Activated naive CD4-positive, alpha-beta T cell treated with anti-CD3 and anti-CD28 coated beads, Interleukin-2, amount 10 ng/mL, durations not matched to agents 7 days and 5 days (primary cell): ENCODE measurements at regions of chr1 and their contacts with region 1.

Region 1: DNA sequence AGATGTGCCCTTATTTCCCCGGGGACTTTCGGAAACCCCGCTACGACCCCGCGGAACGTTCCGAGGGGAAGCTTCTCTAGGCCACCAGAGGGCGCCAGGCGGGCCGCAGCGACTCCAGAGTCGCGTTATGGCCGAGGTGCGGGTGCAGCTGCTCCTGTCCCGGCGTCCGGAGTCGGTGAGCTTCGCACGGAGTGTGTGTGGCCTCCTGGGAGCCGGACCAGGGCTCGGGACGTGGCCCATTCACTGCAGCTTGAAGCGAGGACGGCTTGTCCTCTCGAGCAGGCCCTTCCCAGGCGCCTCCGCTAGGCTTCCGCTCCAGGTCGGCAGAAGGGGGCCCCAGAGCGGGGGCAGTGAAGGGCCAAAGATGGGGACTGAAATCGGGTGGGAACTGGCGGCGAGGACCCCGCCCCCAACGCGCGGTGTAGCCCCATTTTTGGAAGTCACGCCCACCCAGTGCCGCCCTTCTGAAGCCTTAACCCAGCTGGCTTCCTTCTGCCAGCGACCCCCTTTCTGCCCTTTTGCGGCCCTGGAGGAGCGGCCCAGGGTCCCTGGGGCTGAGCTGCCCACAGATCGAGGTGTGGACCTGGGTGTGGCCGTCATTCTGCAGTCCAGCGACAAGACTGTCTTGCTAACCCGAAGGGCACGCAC is at the start of gene NUDT17:
- DNase-seq: peak; percentile 82
- H3K4me3 Mint-ChIP-seq: no peak within 1 kb of the TSS
- H3K27ac Mint-ChIP-seq: peak within 1 kb of the TSS; percentile 50
- H3K4me1 Mint-ChIP-seq: peaks cover 12% of the 10 kb centered on the region
- H3K27me3 Mint-ChIP-seq: no peaks in the 10 kb centered on the region

Region 2: GRCh38 chr1:145740266-145740665 is 105.4 kb before region 1 on chr1:
- CTCF ChIA-PET with region 1: no interaction called
- DNase-seq: no peak
- H3K4me3 Mint-ChIP-seq: no peak overlapping the region
- H3K27ac Mint-ChIP-seq: no peak overlapping the region
- H3K4me1 Mint-ChIP-seq: no peaks in the 10 kb centered on the region
- H3K27me3 Mint-ChIP-seq: no peaks in the 10 kb centered on the region

Region 3: GRCh38 chr1:145782166-145783099 is 63.2 kb before region 1 on chr1:
- CTCF ChIA-PET with region 1: no interaction called
- DNase-seq: no peak
- H3K4me3 Mint-ChIP-seq: no peak overlapping the region
- H3K27ac Mint-ChIP-seq: no peak overlapping the region
- H3K4me1 Mint-ChIP-seq: peaks cover 29% of the 10 kb centered on the region
- H3K27me3 Mint-ChIP-seq: no peaks in the 10 kb centered on the region

Region 4: GRCh38 chr1:145823565-145824498 is 21.8 kb before region 1 on chr1 and contains the starts of genes POLR3C and RNF115:
- CTCF ChIA-PET with region 1: interaction called, 59 read pairs
- DNase-seq: peak; percentile 94
- H3K4me3 Mint-ChIP-seq: peak within 1 kb of the TSS; percentile 96
- H3K27ac Mint-ChIP-seq: peak within 1 kb of the TSS; percentile 96
- H3K4me1 Mint-ChIP-seq: peaks cover 40% of the 10 kb centered on the region
- H3K27me3 Mint-ChIP-seq: no peaks in the 10 kb centered on the region

Region 5: DNA sequence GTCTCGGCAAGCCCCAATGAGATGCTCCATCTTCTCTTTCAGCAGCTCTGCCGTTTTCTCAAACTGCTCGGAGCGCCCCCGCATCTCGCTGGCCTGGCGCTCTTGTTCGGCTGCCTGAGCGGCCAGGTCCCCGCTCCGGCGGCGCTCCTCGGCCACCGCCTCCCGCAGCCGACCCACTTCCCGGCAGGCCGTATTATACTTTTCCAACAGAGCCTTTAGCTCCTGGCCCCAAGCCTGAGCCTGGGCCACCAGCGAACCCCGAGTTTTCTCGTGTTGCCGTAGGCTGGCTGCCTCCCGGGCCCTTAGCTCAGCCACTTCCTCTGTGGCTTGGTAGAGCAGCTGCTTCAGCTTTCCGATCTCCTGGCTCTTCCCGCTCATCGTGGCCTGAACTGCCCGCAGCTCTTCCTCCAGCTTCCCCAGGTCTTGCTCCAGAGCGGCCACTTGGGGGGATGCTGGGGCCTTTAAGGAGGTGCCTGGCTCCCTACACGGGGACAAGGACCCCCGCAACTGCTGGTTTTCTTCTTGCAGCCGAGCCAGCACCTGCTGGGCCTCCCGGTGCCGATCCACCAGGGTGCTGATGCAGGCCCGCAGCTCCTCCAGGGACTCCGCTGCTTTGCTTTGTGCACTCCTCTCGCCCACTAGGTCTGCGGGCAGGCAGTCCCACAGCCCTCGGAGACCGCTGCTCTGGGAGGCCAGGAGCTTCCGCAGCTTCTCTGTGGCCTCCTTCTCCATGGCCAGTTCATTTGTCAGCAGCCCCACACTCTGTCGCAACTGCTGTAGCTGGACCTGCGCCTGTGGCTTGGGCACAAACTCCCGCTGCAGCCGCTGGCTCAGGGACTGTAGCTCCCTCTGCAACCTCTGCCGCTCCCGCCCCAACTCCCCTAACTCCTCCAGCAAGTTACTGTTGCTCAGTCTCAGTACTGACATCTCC is 26.6 kb after region 1 on chr1:
- CTCF ChIA-PET with region 1: interaction called, 31 read pairs
- DNase-seq: peak; percentile 59
- H3K4me3 Mint-ChIP-seq: peak overlapping the region; percentile 62
- H3K27ac Mint-ChIP-seq: no peak overlapping the region
- H3K4me1 Mint-ChIP-seq: peaks cover 16% of the 10 kb centered on the region
- H3K27me3 Mint-ChIP-seq: peaks cover 81% of the 10 kb centered on the region

Region 6: GRCh38 chr1:145963995-145964901 is 118.6 kb after region 1 on chr1 and contains the starts of genes ANKRD34A and POLR3GL:
- CTCF ChIA-PET with region 1: interaction called, 17 read pairs
- DNase-seq: peak; percentile 97
- H3K4me3 Mint-ChIP-seq: peak within 1 kb of the TSS; percentile 87
- H3K27ac Mint-ChIP-seq: peak within 1 kb of the TSS; percentile 93
- H3K4me1 Mint-ChIP-seq: peaks cover 55% of the 10 kb centered on the region
- H3K27me3 Mint-ChIP-seq: peaks cover 27% of the 10 kb centered on the region

Region 7: DNA sequence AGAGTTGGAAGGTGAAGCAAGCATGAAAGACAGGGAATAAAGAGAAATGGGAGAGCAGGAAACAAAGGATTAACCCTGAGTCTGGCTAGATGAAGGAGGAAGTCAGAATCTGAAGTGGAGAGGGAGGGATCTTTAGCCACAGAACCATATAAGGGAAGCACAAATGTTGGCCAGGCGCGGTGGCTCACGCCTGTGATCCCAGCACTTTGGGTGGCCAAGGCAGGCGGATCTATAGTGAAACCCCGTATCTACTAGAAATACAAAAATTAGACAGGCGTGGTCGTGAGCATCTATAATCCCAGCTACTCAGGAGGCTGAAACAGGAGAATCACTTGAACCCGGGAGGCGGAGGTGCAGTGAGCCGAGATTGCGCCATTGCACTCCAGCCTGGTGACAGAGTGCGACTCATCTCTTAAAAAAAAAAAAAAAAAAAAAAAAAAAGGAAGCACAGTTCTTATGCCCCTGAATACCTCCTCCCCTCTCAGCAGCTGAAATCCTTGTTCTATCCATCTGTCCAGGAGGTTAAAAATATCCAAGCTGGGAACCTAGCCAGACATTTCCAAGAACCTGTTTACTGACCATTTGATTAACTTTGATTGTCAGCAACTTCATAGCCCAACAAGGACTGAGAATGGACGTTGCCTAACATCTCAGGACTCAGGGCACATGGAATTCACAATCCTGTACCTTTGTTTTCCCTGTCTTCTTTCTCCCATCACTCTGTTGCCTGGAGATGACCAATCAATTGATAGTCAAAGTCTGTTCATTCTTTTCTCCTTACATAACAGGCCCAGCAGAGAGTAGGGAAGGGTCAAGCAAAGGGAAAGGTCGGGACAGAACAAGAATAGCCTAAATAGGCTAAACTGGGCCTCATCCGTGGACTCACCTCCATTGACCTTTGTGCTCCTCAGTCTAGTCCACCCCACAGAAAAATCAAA is 140.1 kb after region 1 on chr1:
- CTCF ChIA-PET with region 1: no interaction called
- DNase-seq: no peak
- H3K4me3 Mint-ChIP-seq: peak overlapping the region; percentile 4
- H3K27ac Mint-ChIP-seq: peak overlapping the region; percentile 85
- H3K4me1 Mint-ChIP-seq: peaks cover 48% of the 10 kb centered on the region
- H3K27me3 Mint-ChIP-seq: no peaks in the 10 kb centered on the region

Region 8: GRCh38 chr1:146012737-146013403 is 167.2 kb after region 1 on chr1:
- CTCF ChIA-PET with region 1: interaction called, 106 read pairs
- DNase-seq: peak; percentile 75
- H3K4me3 Mint-ChIP-seq: no peak overlapping the region
- H3K27ac Mint-ChIP-seq: no peak overlapping the region
- H3K4me1 Mint-ChIP-seq: peaks cover 17% of the 10 kb centered on the region
- H3K27me3 Mint-ChIP-seq: peaks cover 26% of the 10 kb centered on the region